Heart left ventricle (tissue), 16 donors: ENCODE measurements at regions of chr19 and their contacts with region 1.

Region 1: GRCh38 chr19:47243776-47244547 is 12.4 kb upstream of the CCDC9 start:
- DNase-seq: peak; percentile 93 to 96 (median 95)
- ATAC-seq: peak; percentile 81 to 96 (median 94)
- H3K4me3 ChIP-seq: peak overlapping the region in 9 of 12 donors; percentile 6 to 46 (median 42)
- H3K27ac ChIP-seq: peak overlapping the region in 9 of 12 donors; percentile 37 to 78 (median 57)
- H3K4me1 ChIP-seq: peaks cover 0 to 54% (median 35%) of the 10 kb centered on the region in 12 donors
- H3K27me3 ChIP-seq: peaks cover 0 to 18% (median 0%) of the 10 kb centered on the region in 9 donors
- CTCF ChIP-seq: peak; percentile 94 to 100 (median 98)
- POLR2A ChIP-seq: peak in 1 of 2 donors; percentile 34

Region 2: DNA sequence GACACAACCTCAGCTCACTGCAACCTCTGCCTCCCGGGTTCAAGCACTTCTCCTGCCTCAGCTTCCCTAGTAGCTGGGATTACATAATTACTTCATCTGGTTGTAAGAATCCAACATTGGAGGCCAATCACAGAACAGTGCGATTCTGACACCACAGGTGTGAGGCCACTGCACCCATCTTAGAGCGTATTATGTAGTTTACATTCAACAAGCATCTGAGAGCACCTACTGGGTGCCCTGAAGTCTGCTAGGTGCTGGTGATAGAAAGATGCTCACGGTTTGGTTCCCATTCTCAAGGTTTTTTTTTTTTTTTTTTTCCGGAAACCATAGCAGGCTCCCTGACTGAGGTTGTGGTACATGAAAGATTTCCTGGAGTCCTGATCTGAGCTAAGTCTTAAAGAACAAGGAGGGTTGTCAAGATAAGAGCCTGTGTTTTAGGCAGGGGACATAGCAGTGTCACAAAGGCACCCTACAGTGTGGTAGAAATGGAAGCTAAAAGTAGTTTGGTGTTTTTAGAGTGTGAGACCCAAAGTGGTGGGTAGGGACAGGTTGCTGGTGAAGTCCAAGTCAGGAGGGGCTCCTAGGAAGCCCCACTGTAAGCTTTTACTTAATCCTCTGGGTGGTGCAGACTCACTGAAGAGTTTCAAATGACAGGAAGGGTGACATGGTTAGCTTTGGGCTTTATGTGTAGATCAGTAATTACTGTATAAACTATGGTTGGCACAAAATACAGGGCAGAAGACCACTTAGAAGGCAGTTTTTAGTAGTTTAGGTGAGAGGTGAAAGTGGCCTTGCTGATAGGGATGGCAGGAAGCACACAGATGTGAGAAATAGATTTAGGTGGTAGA is 98.1 kb before region 1 on chr19:
- intact Hi-C with region 1: loop called (anchors 1 to 5 kb)
- DNase-seq: no peak
- ATAC-seq: no peak
- H3K4me3 ChIP-seq: no peak overlapping the region
- H3K27ac ChIP-seq: peak overlapping the region in 2 of 12 donors; percentile 23 to 73
- H3K4me1 ChIP-seq: peaks cover 0 to 11% (median 3%) of the 10 kb centered on the region in 12 donors
- H3K27me3 ChIP-seq: no peaks in the 10 kb centered on the region
- CTCF ChIP-seq: no peak
- POLR2A ChIP-seq: no peak

Region 3: DNA sequence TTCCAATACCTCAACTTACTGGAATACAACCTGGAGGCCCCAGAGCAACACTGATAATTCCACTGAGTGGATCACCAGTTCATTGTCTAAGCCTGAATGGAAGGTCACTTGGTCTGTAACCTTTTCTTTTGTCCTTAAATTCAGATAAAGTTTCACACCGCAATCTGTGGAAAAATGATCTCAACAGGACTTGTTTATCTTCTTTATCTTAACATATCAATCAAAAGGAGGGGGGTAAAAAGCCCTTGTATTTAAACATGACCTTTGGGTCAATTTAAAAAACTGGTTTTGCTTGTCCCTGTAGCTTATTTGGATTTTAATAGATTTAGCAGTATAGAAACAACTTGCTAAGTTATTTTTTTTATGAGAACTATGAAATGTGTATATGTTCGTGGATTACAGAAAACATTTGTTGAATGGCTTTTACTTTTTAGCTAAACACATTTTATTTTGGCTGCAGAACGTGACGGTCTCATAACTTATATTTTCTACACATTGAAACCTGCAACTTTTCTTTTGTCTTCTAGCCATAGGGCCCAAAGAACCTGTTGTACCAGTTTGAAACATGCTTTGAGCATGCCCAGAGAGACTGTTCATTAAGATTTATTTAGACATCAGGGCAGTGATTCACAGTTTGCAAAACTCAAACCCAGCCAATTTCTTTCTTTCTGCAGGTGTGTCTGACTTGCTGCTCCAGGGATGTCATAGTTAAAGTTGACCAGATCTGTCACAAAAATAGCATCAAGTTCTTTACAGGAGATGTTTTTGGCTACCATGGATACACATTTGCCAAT is 91.5 kb before region 1 on chr19:
- intact Hi-C with region 1: loop called (anchors 1 to 5 kb)
- DNase-seq: no peak
- ATAC-seq: peak in 1 of 4 donors; percentile 16
- H3K4me3 ChIP-seq: no peak overlapping the region
- H3K27ac ChIP-seq: peak overlapping the region in 2 of 12 donors; percentile 11 to 45
- H3K4me1 ChIP-seq: peaks cover 6 to 28% (median 18%) of the 10 kb centered on the region in 12 donors
- H3K27me3 ChIP-seq: no peaks in the 10 kb centered on the region
- CTCF ChIP-seq: no peak
- POLR2A ChIP-seq: no peak

Region 4: GRCh38 chr19:47210689-47211316 is 33.2 kb before region 1 on chr19:
- intact Hi-C with region 1: loop called (anchors 1 to 5 kb)
- DNase-seq: peak; percentile 65 to 81 (median 75)
- ATAC-seq: peak; percentile 30 to 72 (median 64)
- H3K4me3 ChIP-seq: no peak overlapping the region
- H3K27ac ChIP-seq: peak overlapping the region in 11 of 12 donors; percentile 24 to 72 (median 53)
- H3K4me1 ChIP-seq: peaks cover 0 to 24% (median 10%) of the 10 kb centered on the region in 12 donors
- H3K27me3 ChIP-seq: no peaks in the 10 kb centered on the region
- CTCF ChIP-seq: peak; percentile 68 to 91 (median 82)
- POLR2A ChIP-seq: no peak

Region 5: GRCh38 chr19:47225746-47226425 is 18.1 kb before region 1 on chr19:
- intact Hi-C with region 1: loop called in 3 of 10 experiments (anchors 1 to 2 kb)
- DNase-seq: peak; percentile 89 to 94 (median 92)
- ATAC-seq: peak; percentile 19 to 78 (median 68)
- H3K4me3 ChIP-seq: peak overlapping the region; percentile 38 to 99 (median 88)
- H3K27ac ChIP-seq: peak overlapping the region; percentile 97 to 100 (median 100)
- H3K4me1 ChIP-seq: peaks cover 0 to 53% (median 31%) of the 10 kb centered on the region in 12 donors
- H3K27me3 ChIP-seq: no peaks in the 10 kb centered on the region
- CTCF ChIP-seq: peak in 9 of 12 donors; percentile 33 to 68 (median 54)
- POLR2A ChIP-seq: peak; percentile 99 to 100

Region 6: GRCh38 chr19:47231215-47231984 is 12.6 kb before region 1 on chr19:
- intact Hi-C with region 1: loop called in 3 of 10 experiments (anchors 1 to 2 kb)
- DNase-seq: peak; percentile 90 to 95 (median 92)
- ATAC-seq: peak; percentile 32 to 49 (median 48)
- H3K4me3 ChIP-seq: peak overlapping the region; percentile 72 to 99 (median 96)
- H3K27ac ChIP-seq: peak overlapping the region; percentile 36 to 100 (median 82)
- H3K4me1 ChIP-seq: peaks cover 0 to 58% (median 32%) of the 10 kb centered on the region in 12 donors
- H3K27me3 ChIP-seq: no peaks in the 10 kb centered on the region
- CTCF ChIP-seq: no peak
- POLR2A ChIP-seq: no peak